OCI-LY7 (cell line): ENCODE measurements at regions of chr4 and their contacts with region 1.

Region 1: GRCh38 chr4:112604589-112604988 is 32.1 kb downstream of the ZGRF1 start:
- DNase-seq: peak; percentile 46
- H3K4me3 ChIP-seq: no peak overlapping the region
- H3K27ac ChIP-seq: no peak overlapping the region
- H3K4me1 ChIP-seq: no peaks in the 10 kb centered on the region
- CTCF ChIP-seq: peak; percentile 87

Region 2: DNA sequence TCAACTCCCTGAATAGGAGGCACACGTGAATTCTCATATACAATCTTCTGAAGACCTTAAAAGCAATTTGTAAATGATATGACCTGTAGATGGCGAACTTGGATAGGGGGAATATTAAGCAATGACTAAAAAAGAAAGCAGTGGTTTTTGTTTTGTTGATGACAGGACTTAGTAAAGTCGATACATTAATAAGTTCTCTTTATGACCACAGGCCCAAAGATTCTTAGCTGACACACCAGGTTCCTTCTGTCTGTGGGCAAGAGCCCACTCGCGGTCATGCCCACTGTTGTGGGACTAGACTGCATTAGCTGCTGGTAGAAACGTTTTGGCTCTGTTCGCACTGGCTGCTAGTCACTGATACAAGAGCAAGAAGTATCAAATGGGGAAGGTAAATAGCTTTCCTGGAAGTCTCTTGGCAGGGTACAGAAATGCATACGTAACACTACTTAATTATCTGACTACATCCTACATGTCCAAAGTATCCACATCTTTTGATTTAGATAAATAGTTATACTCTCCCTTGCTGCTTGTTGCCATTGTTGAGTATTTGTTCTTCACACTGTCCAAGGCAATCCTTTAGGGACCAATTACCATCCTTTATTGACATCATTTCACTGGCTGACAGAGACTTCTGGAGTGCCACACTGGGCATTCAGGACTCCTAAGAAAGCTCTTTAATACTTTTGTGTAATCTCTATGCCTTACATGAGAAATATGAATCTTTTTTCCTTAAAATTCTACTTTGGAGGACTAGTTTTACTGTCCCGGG is 276.4 kb before region 1 on chr4:
- CTCF ChIA-PET with region 1: no interaction called
- POLR2A ChIA-PET with region 1: no interaction called
- intact Hi-C with region 1: loop called (anchors 5 kb)
- DNase-seq: peak; percentile 51
- H3K4me3 ChIP-seq: no peak overlapping the region
- H3K27ac ChIP-seq: no peak overlapping the region
- H3K4me1 ChIP-seq: no peaks in the 10 kb centered on the region
- CTCF ChIP-seq: peak; percentile 80